Left colon (tissue), 2 donors: ENCODE measurements at regions of chr17 and their contacts with region 1.

Region 1: DNA sequence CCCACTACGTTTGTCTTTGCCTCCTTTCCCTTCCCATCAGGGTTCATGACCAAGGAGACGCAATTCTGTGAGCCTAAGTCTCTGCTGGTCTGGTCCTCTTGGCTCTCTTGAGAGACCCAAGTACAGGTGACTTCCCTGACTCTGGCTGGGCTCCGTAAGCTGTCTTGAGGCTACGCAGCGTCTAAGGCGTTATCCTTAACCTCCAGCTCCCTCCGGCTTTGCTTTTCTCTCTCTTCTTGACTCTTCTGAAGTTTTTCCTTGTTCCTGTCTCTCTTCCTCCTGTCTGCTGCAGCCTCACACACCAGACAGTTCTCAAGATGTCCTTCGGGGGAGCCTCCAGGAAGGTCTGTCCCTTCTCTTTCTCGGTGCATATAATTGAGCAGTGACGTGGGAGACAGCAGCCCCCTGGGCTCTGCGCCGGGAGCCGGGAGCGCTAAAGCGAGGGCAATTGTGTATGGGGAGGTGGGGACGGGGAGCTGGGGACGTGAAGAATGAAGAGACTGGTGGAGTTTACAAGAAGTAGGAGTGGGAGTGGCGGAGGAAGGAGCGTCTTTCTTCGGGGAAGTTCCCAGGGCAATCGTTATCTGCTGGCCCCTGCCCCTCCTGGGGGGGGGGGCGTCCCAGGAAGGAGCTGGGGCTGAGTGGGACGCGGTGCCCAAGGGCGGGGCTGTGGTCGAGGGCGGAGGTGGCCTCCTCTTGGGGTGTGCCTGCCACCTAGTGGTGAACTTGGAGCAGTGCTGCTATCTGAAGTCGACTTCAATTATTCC is 6.9 kb upstream of the PIRT start:
- DNase-seq: peak; percentile 89
- ATAC-seq: peak; percentile 89

Region 2: GRCh38 chr17:10646392-10646990 is 198.3 kb before region 1 on chr17:
- intact Hi-C with region 1: loop called in 1 of 2 experiments (anchors 5 kb)
- DNase-seq: peak; percentile 54 to 70
- ATAC-seq: peak; percentile 81

Region 3: GRCh38 chr17:10737168-10737622 is 107.6 kb before region 1 on chr17:
- intact Hi-C with region 1: loop called (anchors 5 to 10 kb)
- DNase-seq: peak; percentile 75 to 93
- ATAC-seq: peak; percentile 89

Region 4: GRCh38 chr17:10743316-10744009 is 101.3 kb before region 1 on chr17:
- intact Hi-C with region 1: loop called (anchors 5 to 10 kb)
- DNase-seq: peak in 1 of 2 donors; percentile 45
- ATAC-seq: peak; percentile 33